ENCODE measurements at regions of chr12 and their contacts with region 1.

Region 1: DNA sequence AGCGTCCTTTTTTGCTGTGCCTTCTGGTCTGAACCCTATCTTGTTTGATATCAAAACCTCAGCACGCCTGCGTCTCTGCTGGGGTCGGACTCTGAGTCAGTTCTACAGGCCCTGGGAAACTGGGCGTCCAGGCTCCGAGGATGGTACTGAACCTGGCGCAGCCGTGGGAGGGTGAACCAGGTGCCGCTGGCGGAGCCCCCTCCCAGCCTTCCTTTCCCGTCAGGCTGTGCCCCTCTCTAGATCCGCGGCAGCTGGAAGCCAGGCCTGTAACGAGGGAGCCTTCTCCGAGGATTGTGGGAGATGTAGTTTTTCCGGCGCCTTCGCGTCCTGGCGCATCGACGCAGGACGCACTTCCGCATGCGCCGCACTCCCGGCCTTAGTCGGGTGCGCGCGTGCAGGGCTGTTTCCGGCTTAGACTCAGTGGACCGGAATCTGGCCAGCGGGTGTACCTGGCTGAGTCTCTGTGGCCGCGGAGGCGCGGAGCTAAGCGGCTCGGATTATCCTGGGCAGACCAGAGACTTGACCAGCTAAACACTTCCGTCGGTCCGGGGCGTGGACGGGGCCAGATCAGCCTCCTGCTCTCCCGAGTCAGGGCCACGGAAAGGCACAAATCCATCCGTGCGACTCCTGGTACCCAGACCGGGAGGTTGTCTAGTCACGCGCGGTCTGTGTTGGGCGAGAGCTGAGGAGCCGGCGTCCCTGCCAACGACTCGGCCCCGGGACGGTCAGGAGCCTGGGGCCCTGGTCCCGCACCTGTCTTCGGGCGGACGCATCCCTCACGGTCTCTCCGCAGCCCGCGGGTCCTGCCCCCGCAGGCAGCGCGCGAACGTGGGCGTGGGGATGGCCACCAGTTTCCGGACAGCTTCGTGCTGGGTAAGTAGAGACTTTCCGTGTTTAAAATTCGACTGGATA is at the start of gene ZNF26:
- DNase-seq: peak; percentile 94
- ATAC-seq: peak; percentile 92
- H3K4me3 ChIP-seq: peak within 1 kb of the TSS; percentile 72 to 95 (median 89)
- H3K4me3 Mint-ChIP-seq: peak within 1 kb of the TSS; percentile 95
- H3K27ac ChIP-seq: peak within 1 kb of the TSS; percentile 75 to 83
- H3K27ac Mint-ChIP-seq: peak within 1 kb of the TSS; percentile 96
- H3K4me1 ChIP-seq: peaks cover 14 to 22% of the 10 kb centered on the region in 2 donors
- H3K4me1 Mint-ChIP-seq: peaks cover 27% of the 10 kb centered on the region
- H3K27me3 ChIP-seq: no peaks in the 10 kb centered on the region
- H3K27me3 Mint-ChIP-seq: no peaks in the 10 kb centered on the region
- CTCF ChIP-seq: no peak
- total RNA-seq, gene ZNF26: 36.0 and 41.5 TPM in 2 replicates

Region 2: DNA sequence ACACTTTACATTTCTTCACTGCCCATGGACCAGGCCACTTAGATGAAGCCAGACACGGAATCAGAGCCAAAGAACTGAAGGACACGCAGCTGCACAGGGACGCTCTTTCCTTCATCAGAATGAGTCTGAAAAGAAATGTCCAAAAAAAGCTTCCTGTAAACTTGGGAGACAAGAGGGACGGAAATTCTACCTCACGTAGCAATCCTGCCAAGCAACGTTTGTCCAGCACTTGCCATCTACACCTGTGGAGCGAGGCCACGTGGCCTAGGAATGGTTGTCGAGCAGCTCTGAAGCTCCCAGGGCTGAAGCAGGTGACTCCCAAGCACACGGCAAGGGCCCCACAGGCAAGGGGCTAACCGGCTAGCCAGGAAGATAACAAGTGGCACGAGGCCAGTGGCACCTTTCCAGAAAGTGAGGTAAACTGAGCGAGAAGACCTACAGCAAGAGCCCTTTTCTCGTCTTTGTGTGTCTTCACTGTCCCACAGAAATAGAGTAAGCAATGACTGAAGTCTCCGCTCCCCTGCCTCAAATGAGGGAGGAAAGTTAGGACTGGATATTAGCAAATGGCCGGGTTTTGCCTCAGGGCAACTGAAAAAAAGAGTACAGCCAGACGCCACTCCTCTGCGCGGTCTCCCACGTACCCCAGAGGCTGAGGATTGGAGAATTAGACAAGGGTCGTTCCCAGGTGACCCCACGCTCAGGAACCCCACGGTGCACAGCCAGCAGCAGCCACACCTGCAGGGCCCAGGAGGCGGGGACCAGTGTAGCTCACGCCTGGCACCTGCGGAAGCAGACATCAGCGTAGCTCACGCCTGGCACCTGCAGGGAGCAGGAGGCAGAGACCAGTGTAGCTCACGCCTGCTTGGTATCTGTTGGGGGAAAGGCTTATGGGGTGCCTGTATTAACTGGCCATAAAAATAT is 37.9 kb before region 1 on chr12:
- CTCF ChIA-PET with region 1: no interaction called
- POLR2A ChIA-PET with region 1: no interaction called
- intact Hi-C with region 1: no loop called
- DNase-seq: no peak
- ATAC-seq: no peak
- H3K4me3 ChIP-seq: no peak overlapping the region
- H3K4me3 Mint-ChIP-seq: no peak overlapping the region
- H3K27ac ChIP-seq: no peak overlapping the region
- H3K27ac Mint-ChIP-seq: no peak overlapping the region
- H3K4me1 ChIP-seq: no peaks in the 10 kb centered on the region
- H3K4me1 Mint-ChIP-seq: no peaks in the 10 kb centered on the region
- H3K27me3 ChIP-seq: no peaks in the 10 kb centered on the region
- H3K27me3 Mint-ChIP-seq: no peaks in the 10 kb centered on the region
- CTCF ChIP-seq: no peak

Region 3: DNA sequence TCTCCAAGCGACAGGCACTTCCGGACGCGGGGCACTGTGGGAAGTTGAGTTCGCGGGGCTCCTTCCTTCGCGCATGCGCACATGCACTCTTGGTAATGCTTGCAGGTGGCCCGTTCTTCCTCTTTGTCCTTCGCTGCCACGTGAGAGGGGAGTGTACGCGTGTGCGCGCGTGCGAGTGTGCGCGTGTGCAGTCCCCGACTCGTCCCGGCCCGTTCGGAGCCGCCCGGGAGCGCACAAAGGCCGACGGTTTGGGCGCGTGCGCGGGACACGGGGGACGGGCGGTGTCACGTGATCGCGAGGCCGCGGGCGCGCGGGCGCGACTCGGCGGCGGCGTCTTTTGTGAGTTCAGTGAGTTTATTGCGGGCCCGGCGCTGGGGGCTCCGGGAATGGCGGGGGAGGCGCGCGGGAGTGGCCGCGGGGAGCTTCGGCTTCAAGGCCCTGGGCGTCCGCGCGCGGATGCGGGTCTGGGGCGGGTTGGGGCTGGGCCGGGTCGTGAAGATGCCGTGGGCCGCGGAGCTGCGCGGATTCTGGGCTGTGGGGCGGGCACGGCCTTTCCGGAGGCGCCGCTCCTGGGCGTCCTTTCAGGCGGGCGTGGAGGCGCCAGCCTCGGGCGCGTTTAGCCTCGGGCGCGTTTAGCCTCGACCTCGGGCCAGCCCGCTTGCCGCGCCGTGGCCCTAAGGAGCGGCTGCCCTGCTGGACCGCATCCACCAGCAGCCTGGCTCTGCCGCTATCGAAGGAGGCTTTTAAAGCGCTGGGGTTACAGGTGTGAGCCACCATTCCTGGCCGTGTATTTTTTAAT is 51.1 kb after region 1 on chr12 and contains the start of gene ZNF84:
- CTCF ChIA-PET with region 1: no interaction called
- POLR2A ChIA-PET with region 1: interaction called, 5 read pairs
- intact Hi-C with region 1: loop called (anchors 1 kb)
- DNase-seq: peak; percentile 99
- ATAC-seq: peak; percentile 95
- H3K4me3 ChIP-seq: peak within 1 kb of the TSS; percentile 51 to 82 (median 69)
- H3K4me3 Mint-ChIP-seq: peak within 1 kb of the TSS; percentile 97
- H3K27ac ChIP-seq: peak within 1 kb of the TSS; percentile 88 to 95
- H3K27ac Mint-ChIP-seq: peak within 1 kb of the TSS; percentile 99
- H3K4me1 ChIP-seq: peaks cover 7 to 10% of the 10 kb centered on the region in 2 donors
- H3K4me1 Mint-ChIP-seq: peaks cover 13% of the 10 kb centered on the region
- H3K27me3 ChIP-seq: no peaks in the 10 kb centered on the region
- H3K27me3 Mint-ChIP-seq: peaks cover 3% of the 10 kb centered on the region
- CTCF ChIP-seq: no peak
- total RNA-seq, gene ZNF84: 48.4 and 61.5 TPM in 2 replicates

Region 4: DNA sequence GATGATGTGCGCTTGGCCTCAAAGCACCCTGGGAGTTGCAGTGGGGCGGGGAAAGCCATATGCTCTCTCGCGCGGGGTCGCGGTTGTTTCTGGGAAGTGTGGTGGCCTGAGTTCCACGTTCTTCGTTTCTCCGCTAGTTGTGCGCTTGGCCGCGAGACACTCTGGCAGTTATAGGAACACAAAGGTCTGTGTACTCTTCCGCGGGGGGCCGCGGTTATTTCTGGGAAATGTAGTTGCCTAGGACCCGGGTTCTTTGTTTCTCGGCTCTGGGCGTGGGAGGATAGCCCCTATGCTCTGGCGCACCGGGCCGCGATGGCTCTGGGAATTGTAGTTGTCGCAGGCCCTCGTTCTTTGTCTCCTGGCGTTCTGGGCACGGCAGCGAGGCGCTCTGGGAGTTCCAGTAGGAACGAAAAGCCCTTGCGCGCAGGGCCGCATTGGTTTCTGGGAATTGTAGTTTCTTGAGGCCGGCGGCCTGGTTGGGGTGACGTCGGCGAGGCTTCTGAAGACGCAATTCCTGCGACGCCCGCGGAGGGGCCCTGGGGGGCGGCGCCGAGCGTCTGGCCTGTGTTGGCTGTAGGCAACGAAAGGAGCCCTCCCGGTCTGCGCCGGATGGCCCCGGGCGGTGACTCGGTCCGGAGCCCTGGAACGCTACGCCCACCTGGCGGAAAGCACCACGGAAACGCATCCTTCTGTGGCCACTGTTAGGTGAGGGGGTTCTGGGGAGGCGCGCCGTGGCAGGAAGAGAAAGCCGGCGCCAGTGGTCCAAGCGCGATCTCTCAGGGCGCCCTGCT is 94.3 kb after region 1 on chr12 and contains the start of gene ZNF140:
- CTCF ChIA-PET with region 1: no interaction called
- POLR2A ChIA-PET with region 1: interaction called, 13 read pairs
- intact Hi-C with region 1: loop called (anchors 1 kb)
- DNase-seq: peak; percentile 99
- ATAC-seq: peak; percentile 63
- H3K4me3 ChIP-seq: peak within 1 kb of the TSS; percentile 63 to 95 (median 84)
- H3K4me3 Mint-ChIP-seq: no peak within 1 kb of the TSS
- H3K27ac ChIP-seq: peak within 1 kb of the TSS; percentile 99
- H3K27ac Mint-ChIP-seq: peak within 1 kb of the TSS; percentile 26
- H3K4me1 ChIP-seq: peaks cover 12 to 15% of the 10 kb centered on the region in 2 donors
- H3K4me1 Mint-ChIP-seq: peaks cover 8% of the 10 kb centered on the region
- H3K27me3 ChIP-seq: no peaks in the 10 kb centered on the region
- H3K27me3 Mint-ChIP-seq: no peaks in the 10 kb centered on the region
- CTCF ChIP-seq: peak; percentile 47
- total RNA-seq, gene ZNF140: 24.2 and 26.8 TPM in 2 replicates

Region 5: GRCh38 chr12:133181238-133181959 is 195.1 kb after region 1 on chr12 and contains the start of gene ZNF268:
- CTCF ChIA-PET with region 1: interaction called, 23 read pairs
- POLR2A ChIA-PET with region 1: interaction called, 4 read pairs
- intact Hi-C with region 1: loop called (anchors 1 kb)
- DNase-seq: peak; percentile 95
- ATAC-seq: peak; percentile 98
- H3K4me3 ChIP-seq: peak within 1 kb of the TSS; percentile 91 to 100 (median 93)
- H3K4me3 Mint-ChIP-seq: peak within 1 kb of the TSS; percentile 95
- H3K27ac ChIP-seq: peak within 1 kb of the TSS; percentile 78 to 95
- H3K27ac Mint-ChIP-seq: peak within 1 kb of the TSS; percentile 96
- H3K4me1 ChIP-seq: peaks cover 10 to 13% of the 10 kb centered on the region in 2 donors
- H3K4me1 Mint-ChIP-seq: peaks cover 18% of the 10 kb centered on the region
- H3K27me3 ChIP-seq: no peaks in the 10 kb centered on the region
- H3K27me3 Mint-ChIP-seq: no peaks in the 10 kb centered on the region
- CTCF ChIP-seq: peak; percentile 88
- total RNA-seq, gene ZNF268: 32.4 and 37.1 TPM in 2 replicates